ENCODE measurements at regions of chr17 and their contacts with region 1.

Region 1: DNA sequence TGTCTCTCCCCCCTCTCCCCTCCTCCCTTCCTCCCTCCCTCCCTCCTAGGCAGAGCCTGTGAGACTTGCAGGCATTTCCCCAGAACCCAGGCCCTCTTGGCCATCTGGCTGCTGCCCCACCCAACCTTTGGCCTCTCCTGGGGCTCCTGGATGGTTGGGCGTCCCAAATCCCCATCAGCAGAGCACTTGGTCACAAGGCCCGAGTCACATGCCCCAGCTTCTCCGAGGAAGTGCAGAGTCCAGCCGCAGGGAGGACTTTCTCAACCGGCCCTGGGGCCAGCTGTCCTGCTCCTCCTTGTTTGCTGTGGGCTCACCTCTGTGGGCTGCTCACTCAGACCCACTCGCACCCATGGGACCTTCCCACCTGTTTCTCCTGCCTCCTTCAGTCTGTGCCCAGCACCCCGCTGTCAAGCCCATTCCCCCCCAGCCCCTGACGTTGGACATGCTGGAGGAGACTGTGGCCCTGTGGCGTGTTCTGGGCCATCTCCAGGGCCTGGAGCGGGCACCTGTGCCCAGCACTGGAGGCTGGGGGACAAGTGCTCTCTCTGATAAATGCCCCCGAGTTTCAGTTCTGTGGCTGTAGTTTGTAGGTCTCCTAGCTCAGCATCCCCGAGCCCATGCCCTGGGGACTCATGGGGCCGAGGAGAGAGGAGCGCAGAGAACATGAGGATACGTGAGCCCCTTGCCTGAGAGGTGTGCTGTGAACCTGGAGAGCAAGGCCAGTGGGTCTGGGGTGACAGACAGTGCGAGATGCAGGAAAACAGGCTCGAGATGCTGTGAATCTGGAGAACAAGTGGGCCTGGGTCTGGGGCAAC is 42.3 kb upstream of the ZNF750 start:
- DNase-seq: no peak
- ATAC-seq: no peak
- H3K4me3 Mint-ChIP-seq: peak overlapping the region; percentile 64 to 93 (median 86)
- H3K27ac Mint-ChIP-seq: peak overlapping the region; percentile 96 to 100 (median 99)
- H3K4me1 Mint-ChIP-seq: peaks cover 46 to 87% (median 78%) of the 10 kb centered on the region in 4 donors
- H3K27me3 Mint-ChIP-seq: peaks cover 0 to 2% (median 0%) of the 10 kb centered on the region in 5 donors

Region 2: DNA sequence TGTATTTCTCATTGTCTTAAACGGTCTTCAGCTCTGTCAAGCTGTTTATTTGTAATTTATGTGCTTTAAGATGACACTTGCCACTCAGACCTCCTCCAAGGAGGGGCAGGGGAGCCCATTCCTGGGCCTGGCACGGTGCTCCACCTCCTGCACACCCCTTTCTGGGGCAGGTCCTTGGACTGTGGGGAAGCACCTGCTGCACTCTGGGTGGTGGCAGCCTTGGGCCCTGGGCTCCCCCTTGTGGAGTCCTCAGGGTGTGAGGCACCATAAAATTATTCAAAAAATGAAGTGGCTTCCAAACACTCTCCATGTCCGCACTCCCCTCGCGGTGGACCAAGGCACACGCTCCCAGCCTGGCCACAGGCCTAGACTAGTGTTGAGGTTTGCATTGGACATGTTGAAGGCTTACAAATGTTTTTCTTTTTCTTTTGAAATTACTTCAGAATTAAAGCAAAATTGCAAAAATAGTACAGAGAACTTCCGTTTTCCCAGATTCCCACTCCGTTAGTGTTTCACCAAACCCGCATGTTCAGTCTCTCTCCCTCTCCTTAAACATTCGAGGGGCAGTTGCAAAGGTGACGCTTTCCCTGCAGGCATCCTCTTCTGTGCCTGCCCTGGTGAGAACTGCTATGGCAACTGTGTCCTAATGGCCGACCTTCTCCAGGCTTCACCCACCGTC is 330.2 kb before region 1 on chr17:
- POLR2A ChIA-PET with region 1: no interaction called
- DNase-seq: peak; percentile 66 to 87 (median 76)
- ATAC-seq: peak; percentile 100
- H3K4me3 Mint-ChIP-seq: peak overlapping the region in 2 of 10 donors; percentile 7 to 29
- H3K27ac Mint-ChIP-seq: peak overlapping the region in 6 of 10 donors; percentile 24 to 80 (median 62)
- H3K4me1 Mint-ChIP-seq: peaks cover 23 to 57% (median 46%) of the 10 kb centered on the region in 4 donors
- H3K27me3 Mint-ChIP-seq: no peaks in the 10 kb centered on the region

Region 3: GRCh38 chr17:82716203-82717010 is 165.7 kb before region 1 on chr17 and contains the start of gene FN3KRP:
- POLR2A ChIA-PET with region 1: no interaction called
- DNase-seq: peak; percentile 80 to 97 (median 86)
- ATAC-seq: peak; percentile 92
- H3K4me3 Mint-ChIP-seq: peak within 1 kb of the TSS; percentile 89 to 99 (median 95)
- H3K27ac Mint-ChIP-seq: peak within 1 kb of the TSS; percentile 38 to 95 (median 93)
- H3K4me1 Mint-ChIP-seq: peaks cover 7 to 25% (median 24%) of the 10 kb centered on the region in 4 donors
- H3K27me3 Mint-ChIP-seq: no peaks in the 10 kb centered on the region
- polyA plus RNA-seq, gene FN3KRP: 28.6 to 46.2 (median 33.9) TPM

Region 4: DNA sequence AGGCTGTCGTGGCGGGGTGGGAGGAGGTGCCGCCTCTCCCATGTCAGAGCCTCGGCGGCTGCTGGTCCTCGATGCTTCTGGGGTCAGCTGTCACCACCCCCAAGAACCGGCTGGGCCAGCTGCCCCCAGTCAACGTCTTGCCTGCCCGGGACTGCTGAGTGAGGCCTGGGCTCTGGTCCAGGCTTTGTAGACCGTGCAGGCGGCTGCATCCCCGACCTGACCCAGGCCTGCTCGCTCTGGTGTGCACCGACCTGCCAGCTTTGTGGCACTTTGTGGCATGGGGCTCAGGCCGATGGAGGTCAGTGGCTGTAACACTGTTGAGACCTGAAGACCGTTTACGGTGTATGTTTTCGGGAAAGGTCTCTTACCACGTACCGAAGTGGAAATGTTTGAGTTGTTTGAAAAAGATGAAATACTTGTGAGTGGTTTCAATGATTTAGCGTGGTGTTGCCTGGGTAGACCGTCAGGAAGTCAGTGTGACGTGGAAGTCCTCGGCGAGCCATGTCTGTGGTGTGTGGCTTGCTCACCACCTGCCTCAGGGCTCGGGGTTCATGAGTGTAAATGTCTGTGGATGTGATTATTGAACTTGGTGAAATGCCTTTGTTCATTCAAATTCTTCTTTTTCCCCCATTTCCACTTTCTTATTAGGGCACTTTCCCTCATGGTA is 10.9 kb after region 1 on chr17:
- POLR2A ChIA-PET with region 1: interaction called, 46 read pairs
- DNase-seq: peak; percentile 42 to 93 (median 84)
- ATAC-seq: peak; percentile 99 to 100
- H3K4me3 Mint-ChIP-seq: peak overlapping the region; percentile 34 to 88 (median 80)
- H3K27ac Mint-ChIP-seq: peak overlapping the region; percentile 90 to 99 (median 96)
- H3K4me1 Mint-ChIP-seq: peaks cover 13 to 46% (median 28%) of the 10 kb centered on the region in 4 donors
- H3K27me3 Mint-ChIP-seq: no peaks in the 10 kb centered on the region

Region 5: DNA sequence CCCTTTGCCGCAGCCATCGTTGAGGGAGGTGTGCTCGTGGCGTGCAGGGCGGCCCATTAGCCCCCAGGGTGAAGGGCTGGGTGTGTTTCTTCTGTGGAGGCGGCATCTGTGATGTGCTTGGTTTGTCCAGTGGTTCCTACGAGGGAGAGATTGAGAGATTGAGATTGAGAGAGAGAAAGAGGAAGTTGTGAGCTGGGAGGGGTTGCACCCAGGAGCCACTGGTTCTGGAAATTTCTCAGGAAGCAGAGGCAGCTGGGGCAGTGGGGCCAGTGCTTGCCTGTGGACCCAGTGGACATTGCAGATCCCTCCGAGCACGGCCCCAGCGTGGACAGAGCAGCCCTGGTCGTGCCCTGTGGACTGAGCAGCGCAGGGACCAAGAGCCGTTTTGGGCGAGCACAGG is 29.7 kb after region 1 on chr17:
- POLR2A ChIA-PET with region 1: interaction called, 32 read pairs
- DNase-seq: no peak
- ATAC-seq: no peak
- H3K4me3 Mint-ChIP-seq: peak overlapping the region in 2 of 10 donors; percentile 24 to 55
- H3K27ac Mint-ChIP-seq: peak overlapping the region in 8 of 10 donors; percentile 1 to 75 (median 44)
- H3K4me1 Mint-ChIP-seq: peaks cover 16 to 55% (median 34%) of the 10 kb centered on the region in 4 donors
- H3K27me3 Mint-ChIP-seq: no peaks in the 10 kb centered on the region